ENCODE measurements at regions of chr20 and their contacts with region 1.

Region 1: DNA sequence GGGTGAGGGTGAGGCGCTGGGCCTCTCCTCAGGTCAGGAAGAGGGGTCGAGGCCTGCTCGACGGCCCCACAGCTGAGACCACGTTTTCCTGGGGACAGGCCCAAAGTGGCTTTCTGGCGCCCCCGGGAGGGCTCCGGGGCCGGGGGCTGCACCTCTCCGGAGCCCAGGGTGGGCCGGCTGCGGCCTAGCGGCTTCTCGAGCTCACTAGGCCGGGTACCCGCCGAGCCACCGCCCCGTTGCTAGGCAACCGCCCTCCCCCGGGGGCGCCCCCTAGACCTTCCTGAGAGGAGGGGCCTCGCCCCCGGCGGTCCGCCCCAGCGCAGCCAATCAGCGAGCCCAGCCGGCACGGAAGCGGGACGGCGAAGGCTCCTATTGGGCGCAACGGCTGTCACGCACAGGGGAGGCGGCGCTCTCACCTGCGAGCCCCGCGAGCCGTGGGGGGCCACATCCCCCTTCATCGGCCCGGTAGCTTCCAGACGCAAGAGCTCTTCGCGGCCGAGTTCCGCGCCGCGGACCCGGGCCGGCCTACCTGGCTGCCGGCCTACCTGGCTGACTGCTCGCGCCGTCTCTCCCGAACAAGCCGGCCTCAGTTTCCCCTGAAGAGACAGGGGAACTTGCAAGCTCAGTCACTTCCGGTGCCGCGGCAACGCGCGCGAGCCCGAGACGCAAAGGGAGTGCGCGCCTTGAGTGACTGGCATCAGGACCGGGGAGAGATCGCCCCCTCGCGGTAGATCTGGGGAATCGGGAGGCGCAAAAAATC is 831 bp upstream of the BCL2L1 start:
- DNase-seq: peak; percentile 99
- ATAC-seq: peak; percentile 86
- H3K4me3 Mint-ChIP-seq: peak overlapping the region; percentile 86
- H3K27ac Mint-ChIP-seq: peak overlapping the region; percentile 94
- H3K4me1 Mint-ChIP-seq: peaks cover 38% of the 10 kb centered on the region
- H3K27me3 Mint-ChIP-seq: no peaks in the 10 kb centered on the region
- CTCF ChIP-seq: no peak; the same call in none of the 2 replicates

Region 2: GRCh38 chr20:31560094-31560899 is 163.2 kb before region 1 on chr20:
- CTCF ChIA-PET with region 1: interaction called, 23 read pairs
- POLR2A ChIA-PET with region 1: interaction called, 3 read pairs
- DNase-seq: peak; percentile 77
- ATAC-seq: peak; percentile 52
- H3K4me3 Mint-ChIP-seq: no peak overlapping the region
- H3K27ac Mint-ChIP-seq: peak overlapping the region; percentile 93
- H3K4me1 Mint-ChIP-seq: peaks cover 10% of the 10 kb centered on the region
- H3K27me3 Mint-ChIP-seq: no peaks in the 10 kb centered on the region
- CTCF ChIP-seq: peak; percentile 91

Region 3: DNA sequence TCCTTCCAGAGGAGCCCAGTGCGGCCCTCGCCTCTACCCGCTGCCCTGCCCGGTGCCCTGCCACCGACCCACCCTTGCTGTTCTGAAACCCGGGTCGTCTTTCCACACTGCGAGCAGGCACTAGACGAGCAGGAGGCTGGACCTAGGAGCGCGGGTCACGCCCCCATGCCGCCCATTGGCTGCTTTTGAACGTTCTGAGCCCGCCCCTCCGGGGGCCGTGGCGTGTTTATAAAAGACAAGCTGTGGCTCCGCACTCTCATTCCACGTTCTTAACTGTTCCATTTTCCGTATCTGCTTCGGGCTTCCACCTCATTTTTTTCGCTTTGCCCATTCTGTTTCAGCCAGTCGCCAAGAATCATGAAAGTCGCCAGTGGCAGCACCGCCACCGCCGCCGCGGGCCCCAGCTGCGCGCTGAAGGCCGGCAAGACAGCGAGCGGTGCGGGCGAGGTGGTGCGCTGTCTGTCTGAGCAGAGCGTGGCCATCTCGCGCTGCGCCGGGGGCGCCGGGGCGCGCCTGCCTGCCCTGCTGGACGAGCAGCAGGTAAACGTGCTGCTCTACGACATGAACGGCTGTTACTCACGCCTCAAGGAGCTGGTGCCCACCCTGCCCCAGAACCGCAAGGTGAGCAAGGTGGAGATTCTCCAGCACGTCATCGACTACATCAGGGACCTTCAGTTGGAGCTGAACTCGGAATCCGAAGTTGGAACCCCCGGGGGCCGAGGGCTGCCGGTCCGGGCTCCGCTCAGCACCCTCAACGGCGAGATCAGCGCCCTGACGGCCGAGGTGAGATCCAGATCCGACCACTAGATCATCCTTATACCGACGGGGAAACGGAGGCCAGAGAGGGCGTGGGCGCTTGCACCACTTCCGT is 118.2 kb before region 1 on chr20 and contains the start of gene ID1:
- CTCF ChIA-PET with region 1: interaction called, 10 read pairs
- POLR2A ChIA-PET with region 1: interaction called, 4 read pairs
- DNase-seq: peak; percentile 95
- ATAC-seq: peak; percentile 54
- H3K4me3 Mint-ChIP-seq: peak within 1 kb of the TSS; percentile 96
- H3K27ac Mint-ChIP-seq: peak within 1 kb of the TSS; percentile 99
- H3K4me1 Mint-ChIP-seq: peaks cover 42% of the 10 kb centered on the region
- H3K27me3 Mint-ChIP-seq: peaks cover 2% of the 10 kb centered on the region; the same call in 1 of the 2 replicates
- CTCF ChIP-seq: no peak
- total RNA-seq, gene ID1: 88.8 to 158 TPM (median 149 TPM) in 3 replicates

Region 4: GRCh38 chr20:31644701-31645100 is 78.8 kb before region 1 on chr20:
- CTCF ChIA-PET with region 1: interaction called, 43 read pairs
- POLR2A ChIA-PET with region 1: no interaction called
- DNase-seq: no peak
- ATAC-seq: no peak
- H3K4me3 Mint-ChIP-seq: no peak overlapping the region
- H3K27ac Mint-ChIP-seq: no peak overlapping the region
- H3K4me1 Mint-ChIP-seq: no peaks in the 10 kb centered on the region
- H3K27me3 Mint-ChIP-seq: no peaks in the 10 kb centered on the region; the same call in 1 of the 2 replicates
- CTCF ChIP-seq: no peak

Region 5: GRCh38 chr20:31674895-31675827 is 48.3 kb before region 1 on chr20:
- CTCF ChIA-PET with region 1: interaction called, 19 read pairs
- POLR2A ChIA-PET with region 1: no interaction called
- DNase-seq: no peak
- ATAC-seq: no peak
- H3K4me3 Mint-ChIP-seq: no peak overlapping the region
- H3K27ac Mint-ChIP-seq: peak overlapping the region; percentile 80
- H3K4me1 Mint-ChIP-seq: peaks cover 37% of the 10 kb centered on the region
- H3K27me3 Mint-ChIP-seq: no peaks in the 10 kb centered on the region
- CTCF ChIP-seq: no peak

Region 6: GRCh38 chr20:31698803-31699718 is 24.4 kb before region 1 on chr20:
- CTCF ChIA-PET with region 1: interaction called, 61 read pairs
- POLR2A ChIA-PET with region 1: interaction called, 4 read pairs
- DNase-seq: no peak
- ATAC-seq: no peak
- H3K4me3 Mint-ChIP-seq: no peak overlapping the region
- H3K27ac Mint-ChIP-seq: peak overlapping the region; percentile 69; the same call in 1 of the 2 replicates
- H3K4me1 Mint-ChIP-seq: peaks cover 48% of the 10 kb centered on the region
- H3K27me3 Mint-ChIP-seq: no peaks in the 10 kb centered on the region
- CTCF ChIP-seq: no peak

Region 7: GRCh38 chr20:31747640-31748039 is 24.1 kb after region 1 on chr20:
- CTCF ChIA-PET with region 1: interaction called, 11 read pairs
- POLR2A ChIA-PET with region 1: no interaction called
- DNase-seq: no peak
- ATAC-seq: no peak
- H3K4me3 Mint-ChIP-seq: no peak overlapping the region
- H3K27ac Mint-ChIP-seq: peak overlapping the region; percentile 34; the same call in 1 of the 2 replicates
- H3K4me1 Mint-ChIP-seq: peaks cover 5% of the 10 kb centered on the region
- H3K27me3 Mint-ChIP-seq: no peaks in the 10 kb centered on the region
- CTCF ChIP-seq: no peak